ENCODE measurements at regions of chr17 and their contacts with region 1.

Region 1: GRCh38 chr17:51056813-51057510 is 63.7 kb downstream of the SPAG9 start:
- H3K4me3 ChIP-seq: no peak overlapping the region
- H3K27ac ChIP-seq: peak overlapping the region; percentile 17
- H3K4me1 ChIP-seq: peaks cover 13% of the 10 kb centered on the region
- CTCF ChIP-seq: 0 out of 2 replicates have a peak, but pooled peaks have one; percentile 12

Region 2: DNA sequence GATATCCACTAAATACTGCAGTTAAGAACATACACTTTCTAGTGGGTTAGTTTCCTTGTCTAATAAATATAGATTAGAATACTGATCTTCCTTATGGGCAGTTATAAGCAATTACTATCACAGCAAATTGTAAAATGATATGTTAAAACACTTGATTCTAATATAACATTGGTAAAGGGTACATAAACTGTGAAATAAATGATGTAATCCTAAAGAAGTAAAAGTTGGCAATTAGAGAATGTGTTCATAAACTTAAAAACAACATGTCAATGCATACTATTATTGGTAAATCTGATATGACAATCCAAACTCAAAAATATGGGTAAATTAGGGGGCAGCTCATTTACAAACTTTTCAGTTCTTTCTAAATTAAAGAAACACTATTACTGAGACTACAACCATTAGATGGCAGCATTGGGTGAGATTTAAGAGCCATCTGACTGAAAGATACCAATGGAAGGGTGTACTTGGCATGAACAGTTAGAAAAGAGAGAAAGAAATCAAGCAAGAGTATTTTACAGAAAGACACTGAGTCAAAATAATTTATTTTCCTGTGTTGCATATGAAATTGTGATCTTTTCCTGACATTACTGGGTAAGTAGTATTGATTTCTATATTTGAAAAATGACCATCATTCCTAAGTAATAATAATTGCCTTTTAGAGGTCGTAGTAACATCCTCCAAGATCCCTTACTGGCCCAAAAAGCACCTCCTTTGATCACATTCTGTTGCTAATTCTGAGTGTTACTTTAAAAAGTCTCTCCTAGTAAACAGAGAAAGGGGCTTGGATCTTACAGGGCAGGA is 55.9 kb before region 1 on chr17:
- CTCF ChIA-PET with region 1: interaction called, 81 read pairs
- POLR2A ChIA-PET with region 1: no interaction called
- H3K4me3 ChIP-seq: no peak overlapping the region
- H3K27ac ChIP-seq: no peak overlapping the region
- H3K4me1 ChIP-seq: no peaks in the 10 kb centered on the region
- CTCF ChIP-seq: no peak

Region 3: DNA sequence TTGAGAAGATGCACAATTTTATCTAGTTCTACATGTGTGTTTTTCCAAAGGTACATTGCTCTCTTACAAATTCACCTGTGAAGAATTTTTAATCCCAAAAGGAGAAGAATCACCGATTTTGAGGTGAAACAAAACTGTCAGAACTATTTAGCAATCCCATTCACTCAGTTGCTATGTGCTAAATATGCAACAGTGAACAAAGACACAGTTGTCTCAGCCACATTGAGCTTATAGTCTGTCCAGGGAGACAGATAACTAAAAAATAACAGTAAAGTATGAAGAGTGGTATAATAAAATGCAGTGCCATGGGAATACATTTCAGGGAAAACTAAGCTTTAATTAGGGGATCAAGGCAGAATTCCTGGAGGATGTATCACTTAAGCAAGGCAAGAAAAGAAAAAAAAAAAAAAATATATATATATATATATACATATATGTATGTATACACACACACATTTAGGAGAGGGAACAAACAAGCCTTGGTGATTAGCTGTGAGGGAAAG is 46.7 kb before region 1 on chr17:
- CTCF ChIA-PET with region 1: interaction called, 31 read pairs
- POLR2A ChIA-PET with region 1: no interaction called
- H3K4me3 ChIP-seq: no peak overlapping the region
- H3K27ac ChIP-seq: no peak overlapping the region
- H3K4me1 ChIP-seq: no peaks in the 10 kb centered on the region
- CTCF ChIP-seq: no peak

Region 4: GRCh38 chr17:51046514-51047384 is 10.2 kb before region 1 on chr17:
- CTCF ChIA-PET with region 1: interaction called, 42 read pairs
- POLR2A ChIA-PET with region 1: interaction called, 4 read pairs
- H3K4me3 ChIP-seq: peak overlapping the region; percentile 6
- H3K27ac ChIP-seq: peak overlapping the region; percentile 52
- H3K4me1 ChIP-seq: peaks cover 15% of the 10 kb centered on the region
- CTCF ChIP-seq: no peak

Measured in HEK293 (cell line).